WTC11 (cell line): ENCODE measurements at regions of chr21 and their contacts with region 1.

Region 1: DNA sequence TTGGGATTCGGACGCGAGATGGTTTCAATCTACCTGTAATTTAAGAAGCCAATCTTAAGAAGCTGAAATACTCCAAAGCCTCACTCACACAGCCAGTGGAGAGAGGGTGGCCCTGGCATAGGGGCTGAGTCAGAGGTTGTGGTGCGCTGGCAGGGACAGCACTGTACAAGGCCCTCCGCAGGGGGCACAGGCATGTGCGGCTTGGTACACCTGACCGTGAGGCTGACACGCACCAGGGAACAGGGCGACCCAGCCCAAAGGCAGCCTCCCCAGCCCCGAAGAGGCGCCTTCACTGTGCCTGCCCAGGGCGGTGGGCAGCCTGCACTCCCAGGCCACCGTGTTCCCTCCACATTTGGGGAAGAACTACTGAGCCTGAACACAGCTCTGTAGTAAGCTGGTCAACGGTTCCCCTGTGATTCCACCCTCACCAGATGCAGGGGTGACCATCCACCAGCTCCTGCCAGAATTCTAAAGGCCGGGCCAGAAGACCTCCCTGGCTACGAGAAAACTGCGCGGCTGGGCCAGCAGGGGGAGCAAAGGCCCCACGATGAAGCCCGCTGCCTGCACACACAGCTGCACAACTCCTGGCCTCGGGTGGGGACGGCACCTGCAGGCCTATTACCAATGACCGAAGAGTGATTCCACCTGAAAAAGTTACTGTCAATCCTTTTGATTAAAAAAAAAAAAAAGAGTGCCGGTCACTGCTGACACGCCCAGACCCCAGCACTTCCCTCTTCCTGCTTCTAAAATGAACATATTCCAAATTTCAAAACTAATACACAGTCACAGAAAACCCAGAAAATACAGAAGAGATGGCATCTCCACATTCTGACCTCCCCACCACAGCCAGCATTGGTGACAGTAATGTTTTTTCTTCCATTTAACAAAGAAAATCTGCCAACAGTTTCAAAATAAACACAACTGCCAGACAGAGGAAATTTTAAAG is 49.6 kb upstream of the RIPK4 start:
- DNase-seq: peak; percentile 75
- ATAC-seq: peak; percentile 73
- H3K4me3 Mint-ChIP-seq: no peak overlapping the region
- H3K27ac Mint-ChIP-seq: no peak overlapping the region
- H3K4me1 Mint-ChIP-seq: no peaks in the 10 kb centered on the region
- H3K27me3 Mint-ChIP-seq: no peaks in the 10 kb centered on the region
- CTCF ChIP-seq: peak; percentile 73

Region 2: DNA sequence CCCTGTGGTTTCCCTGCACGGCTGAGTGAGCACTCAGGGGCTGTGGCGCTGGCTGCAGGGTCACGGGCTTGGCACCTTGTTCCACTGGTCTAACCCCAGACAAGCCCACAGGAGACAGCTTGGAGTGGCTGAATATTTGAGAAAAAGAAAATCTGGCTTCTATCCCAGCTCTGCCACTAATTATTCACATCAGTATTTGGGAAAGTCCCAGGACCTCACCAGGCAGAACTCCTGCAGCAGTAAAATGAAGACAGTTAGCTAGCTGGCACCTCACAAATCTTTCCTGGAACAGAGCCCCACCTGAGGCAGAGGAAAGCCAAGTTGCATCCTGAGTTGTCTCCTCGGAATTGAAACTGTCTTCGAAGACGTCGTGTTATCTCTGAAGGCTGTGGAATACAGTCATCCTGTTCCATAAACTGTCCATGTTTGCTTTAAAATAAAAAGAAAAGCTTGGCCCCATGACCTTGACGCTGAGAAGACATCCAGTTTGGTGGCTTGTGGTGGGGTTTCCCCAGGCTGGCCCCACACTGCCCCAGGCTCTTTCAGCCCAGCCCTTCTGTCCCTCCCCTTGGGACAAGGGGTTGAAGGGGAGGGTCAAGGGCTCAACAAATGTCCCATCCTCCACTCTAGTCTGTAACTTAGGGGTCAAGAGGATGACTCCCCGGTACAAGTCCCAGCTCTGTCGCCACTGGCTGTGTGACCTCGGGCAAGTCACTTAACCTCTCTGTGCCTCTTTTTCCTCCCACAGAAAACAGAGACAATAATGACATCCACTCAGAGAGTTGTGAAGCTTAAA is 214.7 kb before region 1 on chr21:
- CTCF ChIA-PET with region 1: interaction called, 10 read pairs
- POLR2A ChIA-PET with region 1: no interaction called
- DNase-seq: no peak
- ATAC-seq: no peak
- H3K4me3 Mint-ChIP-seq: no peak overlapping the region
- H3K27ac Mint-ChIP-seq: no peak overlapping the region
- H3K4me1 Mint-ChIP-seq: peaks cover 14% of the 10 kb centered on the region
- H3K27me3 Mint-ChIP-seq: peaks cover 1% of the 10 kb centered on the region
- CTCF ChIP-seq: no peak

Region 3: DNA sequence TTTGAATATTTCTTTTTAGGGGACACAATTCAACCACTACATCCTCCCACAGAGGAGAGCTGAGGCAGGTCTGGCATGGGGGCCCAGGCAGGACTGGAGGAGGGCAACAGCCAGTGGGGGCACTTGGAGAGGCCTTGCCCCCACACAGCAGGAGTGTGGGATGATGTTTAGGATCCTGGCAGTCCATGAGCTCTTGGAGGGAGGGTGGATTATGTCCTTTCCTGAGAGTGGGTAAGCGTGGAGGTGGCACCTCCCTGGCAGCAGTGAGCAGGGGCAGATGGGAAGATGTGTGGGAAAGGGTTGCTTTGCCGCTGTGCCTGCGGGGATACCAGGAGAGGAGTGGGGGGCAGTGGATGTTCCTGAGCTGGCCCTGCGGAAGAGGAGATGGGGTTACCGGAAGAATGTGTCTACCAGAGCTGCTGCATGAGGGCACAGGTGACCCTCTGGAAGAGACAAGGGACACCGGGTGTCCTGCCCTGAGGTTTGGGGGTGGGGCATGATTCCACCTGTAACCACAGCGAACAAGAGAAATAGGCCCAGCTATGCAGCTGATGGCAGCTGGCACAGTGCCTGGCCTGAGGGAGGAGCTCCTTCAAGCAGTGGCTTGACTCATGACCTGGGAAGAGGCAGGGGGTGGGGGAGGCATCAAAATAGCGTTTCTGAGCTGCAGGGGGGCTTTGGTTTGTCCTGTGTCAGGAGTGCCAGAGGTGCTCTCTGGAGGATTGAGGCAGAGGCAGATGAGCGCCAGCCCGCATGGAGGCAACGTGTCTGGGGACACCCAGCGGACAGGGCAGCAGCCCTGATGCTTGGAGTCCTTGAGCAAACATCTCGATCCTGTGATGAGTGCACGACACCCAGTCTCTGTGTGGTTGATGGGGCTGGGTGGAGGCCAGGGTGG is 184.7 kb before region 1 on chr21:
- CTCF ChIA-PET with region 1: no interaction called
- POLR2A ChIA-PET with region 1: no interaction called
- DNase-seq: no peak
- ATAC-seq: no peak
- H3K4me3 Mint-ChIP-seq: no peak overlapping the region
- H3K27ac Mint-ChIP-seq: peak overlapping the region; percentile 40; the same call in 1 of the 2 replicates
- H3K4me1 Mint-ChIP-seq: peaks cover 7% of the 10 kb centered on the region; the same call in 1 of the 2 replicates
- H3K27me3 Mint-ChIP-seq: no peaks in the 10 kb centered on the region
- CTCF ChIP-seq: no peak

Region 4: DNA sequence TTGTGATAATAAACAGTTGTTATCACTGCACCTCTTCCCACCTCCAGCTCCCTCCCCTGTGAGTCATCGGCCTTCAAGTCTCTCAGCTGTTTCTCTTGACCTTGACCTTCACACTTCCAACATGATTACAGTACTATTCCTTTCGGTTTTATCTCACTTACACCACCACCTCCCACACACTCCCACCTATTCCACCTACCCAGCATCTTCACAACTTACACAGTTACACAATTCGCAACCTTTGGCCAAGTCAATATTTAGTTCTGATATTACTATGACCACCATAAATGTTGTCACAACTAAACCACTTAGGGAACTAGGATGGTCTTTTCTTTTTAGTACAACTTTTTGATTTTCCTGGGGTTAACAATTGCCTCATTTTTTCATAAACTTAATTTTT is 109.8 kb before region 1 on chr21:
- CTCF ChIA-PET with region 1: no interaction called
- POLR2A ChIA-PET with region 1: no interaction called
- DNase-seq: no peak
- ATAC-seq: no peak
- H3K4me3 Mint-ChIP-seq: no peak overlapping the region
- H3K27ac Mint-ChIP-seq: no peak overlapping the region
- H3K4me1 Mint-ChIP-seq: peaks cover 28% of the 10 kb centered on the region
- H3K27me3 Mint-ChIP-seq: peaks cover 7% of the 10 kb centered on the region
- CTCF ChIP-seq: no peak

Region 5: DNA sequence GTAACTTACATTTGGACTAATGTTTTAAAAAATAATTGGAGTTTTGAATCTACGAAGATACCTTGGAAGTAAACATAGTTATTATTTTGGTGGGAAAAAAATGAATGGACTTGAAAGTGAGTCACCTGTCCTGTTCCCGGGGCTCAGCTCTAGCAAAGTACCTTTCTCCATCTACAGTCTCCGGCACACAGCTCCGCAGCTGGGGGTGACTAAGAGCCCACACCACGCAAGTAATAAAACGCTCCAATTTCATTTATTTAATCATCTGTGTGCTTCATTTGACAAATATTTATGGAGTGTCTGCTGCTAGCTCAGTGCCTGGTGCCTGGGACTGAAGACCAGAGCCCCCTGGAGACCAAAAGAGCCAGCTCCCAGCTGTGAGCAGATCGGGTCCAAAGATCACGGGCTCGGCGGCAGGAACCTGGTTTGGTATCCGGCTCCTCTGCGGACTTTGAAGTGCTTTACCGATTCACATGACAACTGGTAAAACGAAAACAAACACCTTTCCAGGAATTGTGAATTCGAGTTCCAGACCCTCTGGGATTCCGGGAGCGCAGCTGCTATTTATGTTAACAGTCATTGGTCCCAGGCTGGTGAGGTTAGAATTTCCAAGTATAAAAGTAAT is 47.9 kb before region 1 on chr21:
- CTCF ChIA-PET with region 1: interaction called, 13 read pairs
- POLR2A ChIA-PET with region 1: no interaction called
- DNase-seq: peak; percentile 66
- ATAC-seq: peak; percentile 15
- H3K4me3 Mint-ChIP-seq: peak overlapping the region; percentile 83
- H3K27ac Mint-ChIP-seq: no peak overlapping the region; the same call in 1 of the 2 replicates
- H3K4me1 Mint-ChIP-seq: peaks cover 73% of the 10 kb centered on the region
- H3K27me3 Mint-ChIP-seq: peaks cover 89% of the 10 kb centered on the region
- CTCF ChIP-seq: no peak

Region 6: DNA sequence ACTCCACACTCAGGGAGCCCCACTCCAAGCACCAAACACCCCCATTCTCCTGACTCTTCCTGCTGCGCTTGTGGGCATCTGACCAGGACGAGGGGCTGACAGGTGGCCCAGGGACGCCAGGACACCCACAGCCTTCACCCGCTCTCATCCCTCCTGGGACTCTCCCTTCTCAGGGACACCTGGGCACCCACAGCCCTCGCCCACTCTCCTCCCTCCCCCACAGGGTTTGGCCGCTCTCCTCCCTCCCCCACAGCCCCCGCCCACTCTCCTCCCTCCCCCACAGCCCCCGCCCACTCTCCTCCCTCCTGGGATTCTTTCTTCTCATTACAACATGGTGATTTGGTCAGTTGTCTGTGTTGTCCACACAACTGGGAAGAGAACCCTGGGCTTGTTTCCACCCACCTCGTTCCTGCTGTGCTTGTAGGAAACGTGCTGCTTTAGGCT is 19.2 kb after region 1 on chr21:
- CTCF ChIA-PET with region 1: interaction called, 10 read pairs
- POLR2A ChIA-PET with region 1: no interaction called
- DNase-seq: no peak
- ATAC-seq: no peak; the same call in 1 of the 2 replicates
- H3K4me3 Mint-ChIP-seq: peak overlapping the region; percentile 53
- H3K27ac Mint-ChIP-seq: peak overlapping the region; percentile 93
- H3K4me1 Mint-ChIP-seq: peaks cover 25% of the 10 kb centered on the region
- H3K27me3 Mint-ChIP-seq: no peaks in the 10 kb centered on the region
- CTCF ChIP-seq: no peak

Region 7: DNA sequence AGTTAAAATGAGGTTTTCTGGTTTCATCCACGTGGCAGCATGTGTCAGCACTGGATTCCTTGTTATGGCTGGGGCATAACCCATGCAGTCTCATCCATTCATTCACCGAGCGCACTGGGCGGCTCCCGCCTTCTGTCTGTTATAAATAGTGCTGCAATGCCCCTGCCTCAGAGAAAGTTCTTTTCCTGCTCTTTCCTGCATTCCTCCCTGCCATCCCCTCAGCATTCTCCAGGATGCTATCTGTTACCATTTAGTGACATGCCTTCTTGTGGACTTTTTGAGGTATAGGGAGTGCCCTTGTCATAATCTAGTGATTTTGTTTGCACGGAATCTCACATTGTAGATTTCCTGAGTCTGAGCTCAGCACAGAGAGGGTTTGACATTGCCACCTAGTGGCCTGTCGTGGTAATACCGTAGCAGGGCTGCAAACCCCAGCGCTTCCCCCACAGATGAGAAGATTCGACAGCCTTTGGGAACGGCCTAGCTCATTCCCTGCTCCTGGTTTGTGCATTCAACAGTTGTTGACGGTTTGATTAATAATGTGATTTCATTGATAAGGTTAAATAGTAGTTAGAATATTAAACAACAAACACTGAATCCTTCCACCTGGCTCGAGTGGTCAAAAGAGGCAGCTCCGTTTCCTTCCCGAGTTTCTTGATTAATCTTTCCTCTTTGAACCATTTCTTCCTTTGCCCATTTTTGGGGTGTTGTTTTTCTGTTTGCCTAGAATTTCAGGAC is 300.9 kb after region 1 on chr21:
- CTCF ChIA-PET with region 1: interaction called, 16 read pairs
- POLR2A ChIA-PET with region 1: no interaction called
- DNase-seq: peak; percentile 83
- ATAC-seq: peak; percentile 85
- H3K4me3 Mint-ChIP-seq: peak overlapping the region; percentile 41; the same call in 1 of the 2 replicates
- H3K27ac Mint-ChIP-seq: no peak overlapping the region
- H3K4me1 Mint-ChIP-seq: peaks cover 25% of the 10 kb centered on the region
- H3K27me3 Mint-ChIP-seq: no peaks in the 10 kb centered on the region
- CTCF ChIP-seq: peak; percentile 94